ENCODE measurements at regions of chr12 and their contacts with region 1.

Region 1: GRCh38 chr12:111313833-111314259 is 55.0 kb downstream of the PHETA1 start:
- DNase-seq: peak; percentile 75 to 83
- ATAC-seq: peak; percentile 60 to 87 (median 82)
- H3K4me3 ChIP-seq: no peak overlapping the region
- H3K27ac ChIP-seq: no peak overlapping the region
- H3K4me1 ChIP-seq: no peaks in the 10 kb centered on the region
- H3K27me3 ChIP-seq: peaks cover 0 to 12% (median 0%) of the 10 kb centered on the region in 3 donors
- CTCF ChIP-seq: peak; percentile 85

Region 2: GRCh38 chr12:110449799-110450497 is 863.9 kb before region 1 on chr12 and contains the start of gene ARPC3:
- intact Hi-C with region 1: loop called in 1 of 2 experiments (anchors 10 kb)
- DNase-seq: peak; percentile 95 to 97
- ATAC-seq: peak; percentile 99
- H3K4me3 ChIP-seq: peak within 1 kb of the TSS; percentile 88
- H3K27ac ChIP-seq: peak within 1 kb of the TSS; percentile 89
- H3K4me1 ChIP-seq: peaks cover 9% of the 10 kb centered on the region
- H3K27me3 ChIP-seq: no peaks in the 10 kb centered on the region
- CTCF ChIP-seq: peak; percentile 92
- total RNA-seq, gene ARPC3: 52.7 to 71.6 (median 59.7) TPM

Region 3: DNA sequence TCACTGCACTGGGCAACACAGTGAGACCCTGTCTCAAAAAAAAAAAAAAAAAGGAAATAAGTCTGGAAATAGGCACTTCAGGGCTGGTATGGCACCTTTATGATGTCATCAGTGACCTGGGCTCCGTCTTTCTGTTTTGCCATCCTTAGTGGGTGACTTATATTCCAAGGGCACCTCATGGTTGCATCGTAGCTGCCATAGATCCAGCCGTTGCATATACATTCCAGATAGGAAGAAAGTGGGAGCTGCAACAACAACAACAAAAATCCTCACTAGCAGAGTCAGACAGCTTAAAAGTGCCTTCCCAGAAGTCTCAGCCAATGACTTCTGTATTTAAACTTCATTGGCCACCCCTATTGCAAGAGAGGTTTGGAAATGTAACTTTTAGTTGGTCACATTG is 419.9 kb before region 1 on chr12:
- intact Hi-C with region 1: loop called (anchors 5 kb)
- DNase-seq: no peak
- ATAC-seq: no peak
- H3K4me3 ChIP-seq: no peak overlapping the region
- H3K27ac ChIP-seq: no peak overlapping the region
- H3K4me1 ChIP-seq: no peaks in the 10 kb centered on the region
- H3K27me3 ChIP-seq: no peaks in the 10 kb centered on the region
- CTCF ChIP-seq: no peak

Region 4: DNA sequence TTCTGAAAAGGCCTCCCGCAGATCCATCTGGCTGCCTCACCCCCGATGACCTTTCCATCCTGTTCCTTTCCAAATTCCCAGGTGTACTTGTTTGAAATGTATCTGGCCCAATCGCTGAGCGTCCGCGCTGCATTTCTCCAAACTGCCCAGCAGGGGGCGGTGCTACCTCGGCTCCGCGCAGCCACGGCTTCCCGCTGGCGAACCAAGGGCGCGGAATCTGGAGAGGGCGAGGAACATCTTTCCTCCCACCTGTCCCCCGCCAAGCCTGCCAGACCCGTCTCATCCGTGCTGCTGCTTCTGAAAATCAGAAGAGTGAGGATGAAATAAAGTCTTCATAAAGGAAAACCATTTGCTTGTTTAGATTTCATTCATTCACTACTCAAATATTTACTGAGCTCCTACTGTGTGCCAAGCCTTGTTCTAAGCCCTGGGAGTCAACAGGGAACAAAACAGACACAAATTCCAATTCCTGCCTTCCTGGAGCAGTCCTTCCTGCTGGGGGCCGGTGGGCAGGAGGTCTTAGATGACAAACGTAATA is 376.7 kb before region 1 on chr12:
- intact Hi-C with region 1: loop called in 1 of 2 experiments (anchors 5 kb)
- DNase-seq: peak; percentile 54 to 77
- ATAC-seq: peak; percentile 36 to 71 (median 62)
- H3K4me3 ChIP-seq: peak overlapping the region; percentile 48
- H3K27ac ChIP-seq: no peak overlapping the region
- H3K4me1 ChIP-seq: peaks cover 3% of the 10 kb centered on the region
- H3K27me3 ChIP-seq: no peaks in the 10 kb centered on the region
- CTCF ChIP-seq: peak; percentile 90

Region 5: DNA sequence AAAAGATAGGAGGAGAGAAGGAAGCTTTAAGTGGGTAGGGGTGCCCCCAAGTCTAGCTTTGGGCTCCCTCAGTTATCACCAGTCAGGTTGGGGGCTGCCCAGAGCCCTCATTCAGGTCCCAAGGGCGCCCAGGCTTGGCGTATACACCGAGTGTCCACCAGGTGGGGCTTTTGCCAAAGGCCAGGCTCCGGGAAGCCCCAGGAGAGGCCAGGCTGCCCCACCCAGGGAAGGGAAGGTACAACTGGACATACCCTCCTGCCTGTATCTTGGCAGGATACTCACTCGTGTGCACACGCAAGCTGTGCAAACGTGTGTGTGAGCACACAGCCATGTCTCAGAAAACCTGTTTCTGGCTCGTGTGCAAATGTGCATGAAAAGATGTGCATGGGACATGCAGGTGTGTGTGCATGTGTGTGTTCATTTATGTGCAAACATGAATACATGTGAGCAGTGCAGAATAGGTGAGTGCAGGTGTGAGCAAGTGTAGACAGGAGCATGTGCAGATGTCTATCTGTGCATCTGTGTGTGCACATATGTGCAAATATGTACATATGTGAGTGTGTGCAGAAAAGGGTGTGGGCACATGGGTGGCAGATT is 289.5 kb before region 1 on chr12:
- intact Hi-C with region 1: loop called in 1 of 2 experiments (anchors 5 kb)
- DNase-seq: peak; percentile 42 to 67
- ATAC-seq: peak; percentile 71 to 86 (median 76)
- H3K4me3 ChIP-seq: no peak overlapping the region
- H3K27ac ChIP-seq: no peak overlapping the region
- H3K4me1 ChIP-seq: no peaks in the 10 kb centered on the region
- H3K27me3 ChIP-seq: peaks cover 4 to 46% (median 6%) of the 10 kb centered on the region in 3 donors
- CTCF ChIP-seq: peak; percentile 65

Region 6: DNA sequence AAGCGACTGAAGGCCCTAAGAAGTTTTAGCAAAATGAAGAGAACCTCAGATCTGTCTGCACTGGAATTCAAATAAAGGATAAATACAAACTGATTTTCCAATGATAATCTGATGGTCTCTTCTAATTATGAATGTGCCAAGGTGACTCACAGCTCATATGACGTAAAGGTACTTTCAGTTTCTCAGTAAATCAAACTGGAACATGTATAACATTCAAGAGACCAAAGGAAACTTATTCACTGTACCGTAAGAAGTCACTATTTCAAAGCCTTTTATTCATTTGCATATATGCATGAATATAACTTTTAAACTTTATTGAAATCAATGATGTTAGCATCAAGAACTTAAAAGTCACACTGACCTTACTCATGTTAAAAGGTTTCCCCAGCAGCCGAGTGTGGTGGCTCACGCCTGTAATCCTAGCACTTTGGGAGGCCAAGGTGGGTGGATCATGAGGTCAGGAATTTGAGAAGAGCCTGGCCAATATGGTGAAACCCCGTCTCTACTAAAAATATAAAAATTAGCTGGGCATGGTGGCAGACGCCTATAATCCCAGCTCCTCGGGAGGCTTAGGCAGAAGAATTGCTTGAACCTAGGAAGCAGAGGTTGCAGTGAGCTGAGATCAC is 233.0 kb after region 1 on chr12:
- intact Hi-C with region 1: no loop called
- DNase-seq: no peak
- ATAC-seq: no peak
- H3K4me3 ChIP-seq: no peak overlapping the region
- H3K27ac ChIP-seq: no peak overlapping the region
- H3K4me1 ChIP-seq: no peaks in the 10 kb centered on the region
- H3K27me3 ChIP-seq: no peaks in the 10 kb centered on the region
- CTCF ChIP-seq: no peak